ENCODE measurements at regions of chrX and their contacts with region 1.

Region 1: DNA sequence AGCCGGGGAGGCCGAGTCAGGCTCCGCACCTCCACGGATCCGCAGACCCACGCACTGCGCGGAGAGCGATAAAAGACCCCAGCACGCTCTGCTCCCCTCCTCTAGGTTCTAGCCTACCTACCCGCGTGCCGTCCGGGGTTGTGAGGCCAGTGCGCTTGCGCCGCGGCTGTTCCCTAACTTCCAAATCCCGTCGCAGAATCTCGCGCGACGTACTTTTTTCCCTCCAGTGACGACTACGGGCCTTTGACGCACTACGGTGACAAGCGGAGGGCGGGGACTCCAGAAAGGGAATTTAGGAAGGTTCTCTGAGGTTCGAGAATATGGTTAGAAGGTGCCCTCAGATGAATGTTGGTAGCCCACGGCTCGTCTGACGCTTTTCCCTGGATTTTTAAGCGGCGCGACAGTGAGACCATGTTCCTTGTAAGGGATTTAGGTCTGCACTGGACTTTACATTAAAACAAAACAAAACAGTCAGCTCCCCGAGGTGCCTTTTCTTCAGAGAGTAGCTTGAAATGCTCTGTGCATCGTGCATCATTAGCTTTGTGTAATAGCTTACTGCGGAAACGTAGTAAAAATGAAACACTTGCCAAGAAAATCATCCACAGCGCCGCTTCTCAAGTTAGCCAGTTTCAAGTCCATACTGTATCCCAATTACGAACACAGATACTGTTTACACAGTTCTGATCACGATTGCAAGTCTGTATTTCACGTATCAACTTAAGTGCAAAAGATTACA is at the start of gene NKRF:
- H3K4me3 ChIP-seq: peak within 1 kb of the TSS; percentile 69
- H3K27ac ChIP-seq: peak within 1 kb of the TSS; percentile 86
- H3K4me1 ChIP-seq: no peaks in the 10 kb centered on the region
- CTCF ChIP-seq: no peak

Region 2: DNA sequence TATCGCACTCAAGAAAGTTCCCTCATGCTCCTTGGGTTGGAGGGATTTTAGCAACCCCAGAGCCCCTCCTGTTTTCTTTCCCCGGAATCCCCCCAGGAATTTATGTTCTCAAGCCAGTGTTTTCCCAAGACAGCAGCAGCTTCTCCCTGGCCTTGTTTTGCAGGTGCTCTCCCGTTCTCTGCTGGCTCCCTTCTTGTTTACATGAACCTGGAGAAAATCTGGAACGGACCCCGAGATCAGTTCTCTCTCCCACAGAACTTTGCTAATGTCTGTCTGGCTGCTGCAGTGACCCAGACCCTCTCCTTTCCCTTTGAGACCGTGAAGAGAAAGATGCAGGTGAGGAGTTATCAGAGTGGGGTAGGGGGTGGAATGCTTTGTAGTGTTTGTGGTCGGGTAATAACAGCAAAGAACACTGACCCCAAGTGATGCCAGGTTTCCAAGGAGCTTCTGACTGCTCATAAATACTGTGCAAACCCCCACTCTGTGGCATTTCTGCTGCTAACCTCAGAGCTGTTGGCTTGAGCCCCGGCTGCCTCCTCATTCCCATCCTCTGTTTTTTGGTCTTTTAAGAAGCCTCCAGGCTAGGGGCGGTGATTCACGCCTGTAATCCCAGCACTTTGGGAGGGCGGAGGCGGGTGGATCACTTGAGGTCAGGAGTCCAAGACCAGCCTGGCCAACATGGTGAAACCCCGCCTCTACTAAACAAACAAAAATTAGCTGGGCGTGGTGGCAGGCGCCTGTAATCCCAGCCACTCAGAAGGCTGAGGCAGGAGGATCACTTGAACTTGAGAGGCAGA is 196.2 kb before region 1 on chrX:
- CTCF ChIA-PET with region 1: no interaction called
- POLR2A ChIA-PET with region 1: no interaction called
- H3K4me3 ChIP-seq: no peak overlapping the region
- H3K27ac ChIP-seq: peak overlapping the region; percentile 11; the same call in 1 of the 2 replicates
- H3K4me1 ChIP-seq: peaks cover 6% of the 10 kb centered on the region; the same call in 1 of the 2 replicates
- CTCF ChIP-seq: no peak

Region 3: DNA sequence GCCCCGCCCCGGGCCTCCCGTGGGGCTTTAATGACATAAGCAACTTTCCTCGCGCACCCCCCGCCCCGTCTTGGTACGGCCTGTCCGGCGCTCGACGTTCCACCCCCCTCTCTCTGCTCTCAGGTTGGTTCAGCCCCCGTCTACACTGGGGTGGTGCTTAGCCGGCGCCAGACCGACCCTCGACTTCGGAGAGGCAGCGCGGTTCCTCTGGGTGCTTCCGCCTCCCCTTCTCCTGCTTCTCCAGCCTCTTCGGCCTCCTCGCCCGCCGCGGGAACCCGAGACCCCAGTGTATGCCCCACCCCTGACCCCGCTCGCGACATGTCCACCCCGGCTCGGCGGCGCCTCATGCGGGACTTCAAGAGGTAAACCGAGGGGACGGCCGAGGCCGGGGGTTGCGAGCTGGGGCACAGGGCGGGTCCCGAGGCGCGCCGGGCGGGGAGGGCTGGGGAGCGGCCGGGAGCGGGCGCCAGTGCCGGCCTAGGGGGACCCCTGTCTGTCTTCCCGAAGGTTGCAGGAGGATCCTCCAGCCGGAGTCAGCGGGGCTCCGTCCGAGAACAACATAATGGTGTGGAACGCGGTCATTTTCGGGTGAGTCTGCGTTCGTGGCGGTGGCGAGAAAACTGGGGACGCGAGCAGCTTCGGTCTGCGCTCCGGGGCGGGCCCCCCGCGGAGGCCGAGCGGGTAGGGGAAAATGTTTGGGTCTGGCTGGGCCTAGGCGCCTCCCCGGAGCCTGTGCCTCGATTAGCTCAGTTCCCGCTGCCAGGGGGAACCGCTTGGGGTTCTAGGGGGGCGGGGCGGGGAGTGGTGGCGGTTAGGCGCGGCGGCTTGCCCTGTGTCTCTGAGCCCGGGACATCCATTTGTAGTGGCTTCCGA is 31.8 kb before region 1 on chrX and contains the start of gene UBE2A:
- CTCF ChIA-PET with region 1: interaction called, 3 read pairs
- POLR2A ChIA-PET with region 1: interaction called, 11 read pairs
- H3K4me3 ChIP-seq: peak within 1 kb of the TSS; percentile 76
- H3K27ac ChIP-seq: peak within 1 kb of the TSS; percentile 64; the same call in 1 of the 2 replicates
- H3K4me1 ChIP-seq: peaks cover 5% of the 10 kb centered on the region; the same call in 1 of the 2 replicates
- CTCF ChIP-seq: peak; percentile 43

Region 4: DNA sequence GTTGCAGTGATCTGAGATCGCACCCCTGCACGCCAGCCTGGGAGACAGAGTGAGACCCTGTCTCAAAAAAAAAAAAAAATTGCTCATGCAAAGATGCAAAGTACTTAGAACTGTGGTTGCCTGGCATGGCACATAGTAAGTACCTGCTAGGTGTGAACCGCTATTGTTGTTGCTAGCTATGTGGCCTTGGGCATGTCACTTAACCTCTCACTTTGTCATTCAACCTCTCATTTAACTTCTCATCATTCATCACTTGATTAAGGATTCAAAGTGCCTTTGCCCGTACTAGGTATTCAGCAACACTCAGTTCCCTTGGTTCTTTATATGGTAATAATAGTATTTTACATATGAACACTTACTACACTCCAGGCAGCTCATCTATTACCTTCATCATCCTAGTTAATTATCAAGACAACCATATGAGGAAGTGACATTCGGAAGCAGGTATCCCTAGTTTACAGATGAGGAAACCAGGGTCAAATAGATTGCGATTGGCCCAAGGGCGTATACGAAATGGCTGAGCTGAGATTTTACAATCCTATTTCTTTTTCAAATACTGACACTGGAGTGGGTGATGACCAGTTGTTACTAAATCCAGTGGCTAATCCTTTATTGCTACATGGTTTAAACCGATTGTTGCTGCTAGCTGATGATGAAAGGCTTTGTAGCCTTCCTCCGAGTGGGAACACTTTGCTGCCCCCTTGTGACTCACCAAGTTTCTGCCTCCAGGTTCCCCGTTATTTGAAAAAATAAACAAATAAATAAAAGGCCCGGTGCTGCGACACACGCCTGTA is 123.2 kb after region 1 on chrX:
- CTCF ChIA-PET with region 1: interaction called, 16 read pairs
- POLR2A ChIA-PET with region 1: interaction called, 5 read pairs
- H3K4me3 ChIP-seq: no peak overlapping the region
- H3K27ac ChIP-seq: no peak overlapping the region
- H3K4me1 ChIP-seq: no peaks in the 10 kb centered on the region
- CTCF ChIP-seq: no peak

Region 5: GRCh38 chrX:119753571-119754257 is 147.3 kb after region 1 on chrX:
- CTCF ChIA-PET with region 1: interaction called, 6 read pairs
- POLR2A ChIA-PET with region 1: interaction called, 19 read pairs
- H3K4me3 ChIP-seq: no peak overlapping the region
- H3K27ac ChIP-seq: no peak overlapping the region
- H3K4me1 ChIP-seq: 0 out of 2 replicates have a peak, but pooled peaks cover 2% of the 10 kb centered on the region
- CTCF ChIP-seq: peak; percentile 48

Region 6: DNA sequence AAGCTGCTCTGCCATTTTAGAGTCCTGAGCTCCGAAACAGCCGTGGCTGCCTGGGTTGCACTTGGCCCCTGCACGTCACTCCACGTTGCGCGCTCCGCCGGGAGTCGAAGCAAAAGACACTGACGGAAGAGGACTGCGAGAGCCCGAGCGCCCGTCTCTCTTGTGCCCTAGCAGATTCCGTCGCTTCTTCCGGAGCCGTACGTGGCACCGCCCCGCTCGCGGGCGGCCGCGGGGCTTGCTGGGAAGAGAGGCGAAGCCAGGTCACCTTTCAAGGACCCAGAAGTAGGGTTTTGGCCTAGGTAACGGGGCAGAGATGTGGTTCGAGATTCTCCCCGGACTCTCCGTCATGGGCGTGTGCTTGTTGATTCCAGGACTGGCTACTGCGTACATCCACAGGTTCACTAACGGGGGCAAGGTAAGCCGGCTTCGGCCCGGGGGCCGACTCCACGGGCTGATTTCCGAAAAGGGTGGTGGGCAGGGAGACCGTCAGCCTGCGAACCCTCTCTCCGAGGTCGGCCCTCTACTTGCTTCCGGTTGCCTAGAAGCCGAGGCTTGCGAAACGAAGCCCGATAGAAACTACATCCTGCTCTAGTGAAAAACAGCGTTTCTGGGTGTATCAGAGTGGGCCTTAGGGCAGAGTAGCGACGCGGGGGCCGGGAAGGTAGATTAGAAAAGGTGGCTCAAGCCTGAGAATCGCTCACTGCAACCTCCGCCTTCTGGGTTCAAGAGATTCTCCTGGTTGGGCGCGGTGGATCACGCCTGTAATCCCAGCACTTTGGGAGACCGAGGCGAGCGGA is 265.3 kb after region 1 on chrX and contains the starts of genes NDUFA1 and RNF113A:
- CTCF ChIA-PET with region 1: no interaction called
- POLR2A ChIA-PET with region 1: interaction called, 11 read pairs
- H3K4me3 ChIP-seq: peak within 1 kb of the TSS; percentile 59
- H3K27ac ChIP-seq: peak within 1 kb of the TSS; percentile 90
- H3K4me1 ChIP-seq: no peaks in the 10 kb centered on the region
- CTCF ChIP-seq: no peak